ENCODE measurements at regions of chr10 and their contacts with region 1.

Region 1: GRCh38 chr10:99711129-99711719 is 20.7 kb downstream of the COX15 start:
- DNase-seq: peak; percentile 15
- ATAC-seq: peak; percentile 85
- H3K4me3 ChIP-seq: no peak overlapping the region
- H3K27ac ChIP-seq: no peak overlapping the region
- H3K4me1 ChIP-seq: peaks cover 6% of the 10 kb centered on the region; the same call in 1 of the 2 replicates
- H3K27me3 ChIP-seq: no peaks in the 10 kb centered on the region
- CTCF ChIP-seq: peak; percentile 57 to 73 (median 60)
- EP300 ChIP-seq: no peak
- POLR2A ChIP-seq: no peak
- RAD21 ChIP-seq: peak; percentile 78

Region 2: DNA sequence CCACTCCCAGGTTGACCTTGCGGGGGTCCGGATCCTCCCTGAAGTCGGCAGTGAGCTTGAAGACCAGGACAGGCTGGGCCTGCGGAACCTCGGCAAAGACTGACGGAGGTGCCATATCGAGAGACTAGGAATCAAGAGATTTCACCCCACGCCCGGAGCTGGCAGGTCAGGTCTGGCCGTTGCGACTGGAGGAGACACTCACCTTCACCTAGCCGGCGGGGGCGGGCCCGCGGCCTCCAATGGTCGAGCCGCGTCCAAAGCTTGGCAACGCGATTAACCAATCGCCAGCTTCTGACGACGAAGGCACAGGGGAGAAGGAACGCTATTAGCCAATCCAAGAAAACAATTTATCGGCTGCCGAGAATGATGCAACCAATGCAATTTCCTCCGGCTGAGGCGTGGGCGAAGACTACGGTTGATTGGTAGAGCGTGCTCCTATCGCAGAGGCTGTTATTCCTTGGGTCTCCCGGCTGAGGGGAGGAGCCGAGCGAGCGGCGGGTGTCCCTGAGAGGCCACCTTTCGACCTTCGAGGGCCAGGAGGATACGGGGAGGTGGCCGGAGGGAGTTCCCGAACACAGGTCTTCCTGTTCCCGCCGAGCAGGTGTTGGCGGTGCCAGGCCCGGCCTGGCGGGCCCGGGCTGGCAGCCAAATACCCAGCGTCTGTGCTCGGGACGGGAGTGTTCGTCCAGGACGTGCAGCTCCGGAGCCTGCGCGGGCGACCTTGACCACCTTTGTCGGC is 280.6 kb before region 1 on chr10 and contains the start of gene GOT1:
- CTCF ChIA-PET with region 1: interaction called, 43 read pairs
- POLR2A ChIA-PET with region 1: no interaction called
- RAD21 ChIA-PET with region 1: interaction called, 15 read pairs
- SMC1A ChIA-PET with region 1: interaction called, 14 read pairs
- in situ Hi-C with region 1: loop called (anchors 5 kb)
- intact Hi-C with region 1: no loop called
- DNase-seq: peak; percentile 99
- ATAC-seq: peak; percentile 97
- H3K4me3 ChIP-seq: peak within 1 kb of the TSS; percentile 97
- H3K27ac ChIP-seq: peak within 1 kb of the TSS; percentile 71
- H3K4me1 ChIP-seq: peaks cover 4% of the 10 kb centered on the region; the same call in 1 of the 2 replicates
- H3K27me3 ChIP-seq: no peaks in the 10 kb centered on the region
- CTCF ChIP-seq: no peak
- EP300 ChIP-seq: no peak
- POLR2A ChIP-seq: peak; percentile 94
- RAD21 ChIP-seq: no peak
- polyA plus RNA-seq, gene GOT1: 56.2 to 58.4 TPM

Region 3: GRCh38 chr10:99612167-99612831 is 98.9 kb before region 1 on chr10:
- CTCF ChIA-PET with region 1: interaction called, 59 read pairs
- POLR2A ChIA-PET with region 1: no interaction called
- RAD21 ChIA-PET with region 1: interaction called, 10 read pairs
- SMC1A ChIA-PET with region 1: interaction called, 25 read pairs
- in situ Hi-C with region 1: no loop called
- intact Hi-C with region 1: no loop called
- DNase-seq: no peak
- ATAC-seq: peak; percentile 83
- H3K4me3 ChIP-seq: no peak overlapping the region
- H3K27ac ChIP-seq: no peak overlapping the region
- H3K4me1 ChIP-seq: no peaks in the 10 kb centered on the region
- H3K27me3 ChIP-seq: no peaks in the 10 kb centered on the region
- CTCF ChIP-seq: peak; percentile 82 to 86 (median 86); a peak in 5 of 6 replicates
- EP300 ChIP-seq: no peak
- POLR2A ChIP-seq: no peak; the same call in 1 of the 2 replicates
- RAD21 ChIP-seq: peak; percentile 87

Region 4: DNA sequence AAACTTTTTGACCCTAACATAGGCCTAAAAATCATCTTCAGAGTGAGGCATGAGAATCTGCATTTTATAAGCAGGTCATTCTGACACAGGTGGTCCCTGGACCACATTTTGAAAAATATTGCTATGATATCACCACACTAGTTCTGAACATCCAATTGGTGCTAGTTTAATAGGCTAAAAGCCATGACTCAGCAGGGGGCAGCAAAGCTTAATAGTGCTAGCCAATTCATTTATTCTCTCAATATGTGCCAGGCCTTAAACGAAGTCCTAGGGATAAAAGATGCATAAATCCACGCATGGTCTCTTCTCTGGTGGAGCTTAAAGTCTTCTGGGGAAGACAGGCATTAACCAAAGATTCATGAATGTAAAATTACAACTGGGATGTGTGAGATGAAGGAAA is 80.8 kb before region 1 on chr10:
- CTCF ChIA-PET with region 1: interaction called, 34 read pairs
- POLR2A ChIA-PET with region 1: no interaction called
- RAD21 ChIA-PET with region 1: interaction called, 3 read pairs
- SMC1A ChIA-PET with region 1: interaction called, 6 read pairs
- in situ Hi-C with region 1: loop called (anchors 5 kb)
- intact Hi-C with region 1: loop called (anchors 1 kb)
- DNase-seq: no peak
- ATAC-seq: peak; percentile 81
- H3K4me3 ChIP-seq: no peak overlapping the region
- H3K27ac ChIP-seq: no peak overlapping the region
- H3K4me1 ChIP-seq: peaks cover 7% of the 10 kb centered on the region
- H3K27me3 ChIP-seq: no peaks in the 10 kb centered on the region
- CTCF ChIP-seq: peak; percentile 33 to 53 (median 44); a peak in 4 of 6 replicates
- EP300 ChIP-seq: no peak
- POLR2A ChIP-seq: no peak
- RAD21 ChIP-seq: peak; percentile 66

Measured in GM12878 (cell line).